GM12878 (cell line): ENCODE measurements at regions of chr4 and their contacts with region 1.

Region 1: GRCh38 chr4:138669479-138670315 is 345.9 kb upstream of the NOCT start:
- DNase-seq: no peak
- ATAC-seq: peak; percentile 60
- H3K4me3 ChIP-seq: no peak overlapping the region
- H3K27ac ChIP-seq: no peak overlapping the region
- H3K4me1 ChIP-seq: no peaks in the 10 kb centered on the region; the same call in 1 of the 2 replicates
- H3K27me3 ChIP-seq: peaks cover 0 to 2% of the 10 kb centered on the region in 2 experiments; a peak in 1 of 4 replicates
- CTCF ChIP-seq: no peak
- EP300 ChIP-seq: no peak; a peak in 1 of 4 replicates
- POLR2A ChIP-seq: no peak
- RAD21 ChIP-seq: no peak

Region 2: GRCh38 chr4:138647433-138647832 is 22.3 kb before region 1 on chr4:
- CTCF ChIA-PET with region 1: interaction called, 5 read pairs
- POLR2A ChIA-PET with region 1: interaction called, 5 read pairs
- RAD21 ChIA-PET with region 1: interaction called, 9 read pairs
- SMC1A ChIA-PET with region 1: interaction called, 10 read pairs
- in situ Hi-C with region 1: no loop called
- intact Hi-C with region 1: no loop called
- DNase-seq: no peak
- ATAC-seq: no peak
- H3K4me3 ChIP-seq: no peak overlapping the region
- H3K27ac ChIP-seq: no peak overlapping the region
- H3K4me1 ChIP-seq: no peaks in the 10 kb centered on the region
- H3K27me3 ChIP-seq: no peaks in the 10 kb centered on the region
- CTCF ChIP-seq: no peak
- EP300 ChIP-seq: no peak
- POLR2A ChIP-seq: no peak
- RAD21 ChIP-seq: no peak